Common myeloid progenitor, CD34-positive (primary cell): ENCODE measurements at regions of chr15 and their contacts with region 1.

Region 1: GRCh38 chr15:67836477-67836876 is 3.4 kb downstream of the RNU6-1 start:
- DNase-seq: peak; percentile 60 to 75 (median 65)
- H3K4me3 ChIP-seq: peak overlapping the region in 3 of 7 experiments; percentile 57 to 71 (median 71)
- H3K27ac ChIP-seq: no peak overlapping the region
- H3K4me1 ChIP-seq: peaks cover 16 to 70% (median 64%) of the 10 kb centered on the region in 4 experiments
- H3K27me3 ChIP-seq: peaks cover 3 to 55% (median 30%) of the 10 kb centered on the region in 5 experiments

Region 2: GRCh38 chr15:67456677-67457529 is 379.6 kb before region 1 on chr15:
- CTCF ChIA-PET with region 1: interaction called, 13 read pairs
- POLR2A ChIA-PET with region 1: no interaction called
- DNase-seq: peak; percentile 66 to 78 (median 74)
- H3K4me3 ChIP-seq: no peak overlapping the region
- H3K27ac ChIP-seq: no peak overlapping the region
- H3K4me1 ChIP-seq: peaks cover 0 to 2% (median 0%) of the 10 kb centered on the region in 4 experiments
- H3K27me3 ChIP-seq: no peaks in the 10 kb centered on the region

Region 3: DNA sequence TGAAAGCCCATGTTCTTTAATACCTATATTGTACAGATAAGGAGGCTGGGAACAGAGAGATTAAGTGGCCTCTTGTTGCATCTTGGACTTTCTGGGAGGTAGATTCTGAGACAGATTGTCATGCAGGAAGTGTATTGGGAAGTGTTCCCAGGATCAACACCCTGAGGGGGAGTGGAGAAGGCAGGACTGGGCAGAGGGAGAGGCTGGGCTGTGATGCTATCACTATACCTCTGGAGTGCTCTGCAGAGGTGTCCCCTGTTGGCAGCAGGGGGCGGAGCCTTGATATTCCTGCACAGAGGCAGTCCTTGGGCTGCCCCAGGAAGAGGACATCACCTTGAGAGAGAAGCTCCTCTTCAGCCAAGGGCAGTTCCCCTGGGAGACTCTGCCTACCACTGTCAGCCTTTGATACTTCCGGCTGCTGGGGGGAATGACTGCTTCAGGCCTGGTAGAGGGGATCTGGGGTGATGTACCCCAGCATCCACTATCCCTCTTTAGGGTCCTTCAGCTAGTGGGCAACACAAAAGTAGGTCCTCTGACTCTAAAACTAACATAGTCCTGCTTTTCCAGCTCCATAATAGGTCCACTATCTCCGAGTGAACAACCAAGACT is 100.8 kb after region 1 on chr15:
- CTCF ChIA-PET with region 1: no interaction called
- POLR2A ChIA-PET with region 1: no interaction called
- DNase-seq: no peak
- H3K4me3 ChIP-seq: no peak overlapping the region
- H3K27ac ChIP-seq: no peak overlapping the region
- H3K4me1 ChIP-seq: peaks cover 0 to 10% (median 3%) of the 10 kb centered on the region in 4 experiments
- H3K27me3 ChIP-seq: no peaks in the 10 kb centered on the region